T-cell (primary cell): ENCODE measurements at regions of chr16 and their contacts with region 1.

Region 1: DNA sequence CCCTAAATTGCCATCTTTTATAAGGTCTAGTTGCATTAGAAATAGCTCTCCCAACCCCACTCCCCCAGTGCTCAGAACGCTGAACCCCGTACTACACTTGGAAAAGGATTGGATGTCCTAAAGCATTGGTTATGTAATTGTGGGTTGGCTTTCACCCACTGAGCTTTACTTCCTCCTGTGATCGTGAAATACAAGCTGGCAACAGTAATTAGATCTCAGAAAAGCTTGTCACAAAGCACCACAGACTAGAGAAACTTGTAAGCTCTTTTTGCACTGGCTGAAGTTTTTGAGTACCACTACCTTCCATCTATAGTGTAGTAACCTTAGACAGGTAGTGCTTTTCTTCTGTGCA is 54.4 kb downstream of the SIAH1 start:
- DNase-seq: no peak
- ATAC-seq: no peak
- H3K4me3 ChIP-seq: no peak overlapping the region
- H3K4me3 Mint-ChIP-seq: no peak overlapping the region
- H3K27ac ChIP-seq: no peak overlapping the region
- H3K27ac Mint-ChIP-seq: peak overlapping the region in 1 of 2 donors; percentile 56
- H3K4me1 ChIP-seq: no peaks in the 10 kb centered on the region
- H3K4me1 Mint-ChIP-seq: peaks cover 18 to 21% (median 20%) of the 10 kb centered on the region in 3 donors
- H3K27me3 ChIP-seq: no peaks in the 10 kb centered on the region
- H3K27me3 Mint-ChIP-seq: no peaks in the 10 kb centered on the region

Region 2: GRCh38 chr16:46891910-46892309 is 1438.9 kb before region 1 on chr16:
- CTCF ChIA-PET with region 1: no interaction called
- POLR2A ChIA-PET with region 1: interaction called in 1 of 2 experiments, 11 read pairs
- DNase-seq: no peak
- ATAC-seq: no peak
- H3K4me3 ChIP-seq: no peak overlapping the region
- H3K4me3 Mint-ChIP-seq: no peak overlapping the region
- H3K27ac ChIP-seq: no peak overlapping the region
- H3K27ac Mint-ChIP-seq: no peak overlapping the region
- H3K4me1 ChIP-seq: no peaks in the 10 kb centered on the region
- H3K4me1 Mint-ChIP-seq: no peaks in the 10 kb centered on the region
- H3K27me3 ChIP-seq: peaks cover 0 to 20% of the 10 kb centered on the region in 2 experiments
- H3K27me3 Mint-ChIP-seq: peaks cover 0 to 4% of the 10 kb centered on the region in 2 donors